ENCODE measurements at regions of chr2 and their contacts with region 1.

Region 1: GRCh38 chr2:156332534-156333273 is at the start of gene NR4A2:
- DNase-seq: peak; percentile 95
- total RNA-seq, gene NR4A2: 1.1 TPM

Region 2: GRCh38 chr2:156400706-156401678 is 68.3 kb after region 1 on chr2:
- intact Hi-C with region 1: loop called (anchors 2 kb)
- DNase-seq: peak; percentile 78

Region 3: GRCh38 chr2:156411835-156412234 is 79.1 kb after region 1 on chr2:
- intact Hi-C with region 1: no loop called
- DNase-seq: no peak

Region 4: DNA sequence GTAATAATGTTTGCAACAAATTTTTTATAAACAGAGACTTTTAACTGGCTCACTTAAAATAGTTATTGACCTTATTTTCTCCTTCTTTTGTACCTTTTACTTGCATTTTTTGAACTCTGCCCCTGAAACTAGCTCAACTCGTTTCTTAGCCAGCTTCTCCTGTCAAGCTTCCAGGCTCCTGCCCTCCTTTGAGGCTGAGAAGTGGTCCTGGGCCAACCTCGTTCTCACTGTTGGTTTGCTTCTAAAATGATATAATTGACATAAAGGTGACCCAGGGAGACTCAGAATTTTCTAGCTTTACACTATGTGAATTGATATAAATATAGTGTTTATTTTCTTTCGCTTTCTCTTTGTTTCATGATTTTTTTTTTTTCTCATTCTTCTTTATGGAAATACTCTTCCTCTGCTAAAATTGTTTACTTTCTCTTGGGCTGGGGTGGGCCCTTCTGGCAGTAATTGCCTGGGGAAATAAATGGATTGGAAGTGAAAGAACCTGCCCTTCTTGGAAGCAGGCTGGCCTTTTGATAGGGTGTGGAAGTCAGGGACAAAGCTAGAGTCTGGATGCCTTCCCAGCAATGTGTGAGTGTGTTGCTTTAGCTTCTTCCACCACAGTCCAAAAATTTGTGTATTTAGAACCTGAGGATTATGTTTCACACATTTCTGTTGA is 134.2 kb after region 1 on chr2:
- intact Hi-C with region 1: loop called (anchors 10 kb)
- DNase-seq: no peak

Region 5: DNA sequence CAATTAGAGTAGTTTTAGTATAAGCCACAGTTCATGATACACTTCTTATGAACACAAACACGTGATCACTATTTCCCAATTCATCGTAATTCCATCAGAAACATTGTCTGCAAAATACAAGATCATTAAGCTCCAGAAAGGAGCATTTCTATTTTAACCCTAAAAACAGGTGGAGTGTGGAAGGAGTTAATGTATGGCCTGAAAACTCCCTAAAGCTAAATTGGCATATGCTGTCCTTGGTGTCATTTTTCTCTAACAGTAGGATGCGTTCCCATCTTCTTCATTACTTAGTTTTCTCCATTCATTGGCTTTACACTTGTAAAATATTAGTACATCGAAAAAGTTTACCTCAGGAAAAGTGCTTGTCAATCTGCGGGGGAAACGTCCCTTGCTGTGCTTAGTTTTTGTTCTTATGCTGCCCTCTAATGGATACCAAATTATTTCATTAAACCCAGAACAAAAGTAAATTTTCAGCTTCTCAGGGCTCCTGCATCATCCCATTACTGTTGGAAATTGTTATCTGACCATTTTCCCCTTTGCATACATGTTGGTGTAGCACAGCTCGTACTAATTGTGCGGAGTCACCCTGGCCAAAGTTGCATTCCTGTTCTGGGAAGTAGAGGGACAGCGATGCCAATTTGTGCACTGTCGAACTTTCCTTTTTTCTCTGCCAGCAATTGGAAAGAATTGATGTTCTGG is 256.8 kb after region 1 on chr2:
- intact Hi-C with region 1: loop called (anchors 2 kb)
- DNase-seq: no peak

Region 6: DNA sequence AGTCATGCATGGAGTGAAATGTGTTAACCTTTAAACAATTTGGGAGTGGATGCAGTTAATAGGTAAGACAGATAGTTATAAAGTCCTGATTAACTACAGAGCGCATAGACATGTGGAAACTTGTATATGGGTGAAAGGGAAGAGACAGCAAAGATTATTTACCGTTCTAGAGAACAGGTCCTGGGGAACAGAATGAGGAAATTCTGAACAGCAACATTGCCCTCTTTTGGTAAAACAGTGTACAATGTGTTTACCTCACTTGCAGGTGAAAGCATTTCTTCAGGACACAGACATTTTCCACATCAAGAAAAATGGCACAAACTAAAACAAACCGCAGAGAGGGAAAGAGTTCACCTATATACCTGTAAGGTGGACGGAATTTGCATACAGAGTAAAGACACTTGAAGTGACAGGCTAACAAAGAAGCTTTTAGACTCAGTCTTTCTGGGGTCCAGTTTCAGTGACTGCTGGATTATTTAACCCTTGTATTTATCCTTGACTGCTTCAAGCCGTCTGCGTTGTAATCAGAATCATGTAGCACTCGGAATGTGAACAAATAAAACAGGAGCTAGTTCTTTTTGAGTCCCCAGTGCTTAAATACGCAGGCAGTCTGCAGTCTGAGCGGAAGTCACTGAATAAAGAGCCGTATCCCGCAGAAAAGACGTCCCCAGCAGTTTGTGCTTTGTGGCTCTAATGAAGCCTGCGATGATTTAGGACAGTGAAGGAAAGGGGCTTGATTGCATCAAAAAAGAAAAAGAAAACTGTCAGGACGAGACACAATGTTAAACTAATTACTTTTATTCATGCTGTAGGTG is 560.0 kb after region 1 on chr2:
- intact Hi-C with region 1: loop called (anchors 10 kb)
- DNase-seq: no peak

Region 7: DNA sequence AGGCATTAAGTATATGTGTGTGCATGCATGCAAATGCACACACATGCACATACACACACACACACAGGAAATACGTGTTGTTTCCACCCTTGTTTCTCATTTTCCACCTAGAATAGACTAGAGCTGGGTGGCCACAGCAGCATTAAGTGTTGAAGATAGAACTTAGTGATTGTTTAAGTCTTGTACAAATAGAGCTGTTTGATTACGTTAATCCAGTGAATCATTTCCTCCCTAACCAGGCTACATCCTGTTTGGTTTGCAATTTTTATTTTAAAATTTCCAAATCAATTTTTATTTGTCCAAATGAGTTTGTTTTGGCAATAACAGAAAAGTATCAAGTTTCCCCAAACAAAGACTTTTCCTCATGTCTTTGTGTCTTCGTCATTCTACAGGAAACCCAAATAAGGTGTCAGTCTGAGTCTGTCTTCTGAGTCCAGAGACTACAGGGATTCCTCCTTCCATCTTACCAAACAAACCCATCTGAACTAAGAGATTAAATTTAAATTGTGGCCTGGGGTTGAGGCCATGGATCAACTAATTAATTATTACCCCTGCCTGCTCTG is 850.2 kb after region 1 on chr2:
- intact Hi-C with region 1: loop called (anchors 10 kb)
- DNase-seq: no peak